ENCODE measurements at regions of chr14 and their contacts with region 1.

Region 1: DNA sequence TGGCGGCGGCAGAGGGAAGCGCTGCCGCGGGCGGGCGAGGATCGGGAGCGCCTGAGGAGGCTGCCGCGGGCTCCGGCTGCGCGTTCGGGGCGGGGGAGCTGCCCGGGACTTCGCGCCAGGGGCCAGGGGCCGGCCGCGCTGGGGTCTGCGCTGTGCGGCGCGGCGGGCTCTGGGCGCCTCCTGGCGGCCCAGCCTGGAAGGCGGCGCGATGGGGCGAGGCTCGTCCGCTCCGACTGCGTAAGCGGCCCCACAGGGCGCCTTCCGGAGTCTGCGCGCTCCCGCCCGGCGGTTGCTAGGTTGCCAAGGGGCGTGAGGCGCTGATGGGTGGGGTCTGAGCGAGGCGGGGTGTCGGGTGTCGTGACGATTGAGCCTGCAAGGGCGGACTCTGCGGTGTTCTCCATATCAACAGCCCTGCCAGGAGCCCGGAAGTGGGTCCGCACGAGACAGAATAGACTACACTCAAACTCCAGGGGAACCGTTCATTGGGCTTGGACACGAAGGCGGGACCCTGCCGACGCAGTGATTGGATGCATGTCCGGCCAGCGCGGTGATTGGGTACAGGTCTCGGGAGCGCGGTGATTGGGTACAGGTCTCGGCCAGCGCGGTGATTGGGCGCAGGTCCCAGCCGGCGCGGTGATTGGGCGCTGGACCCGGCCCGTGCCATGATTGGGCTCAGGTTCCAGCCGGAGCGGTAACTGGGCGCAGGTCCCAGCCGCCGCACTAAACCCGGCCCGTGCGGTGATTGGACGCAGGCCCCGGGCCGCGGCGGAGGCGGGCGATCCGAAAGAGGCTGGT is at the start of gene TEDC1:
- DNase-seq: peak; percentile 99
- ATAC-seq: peak; percentile 73
- H3K4me3 ChIP-seq: peak within 1 kb of the TSS; percentile 86
- H3K27ac ChIP-seq: peak within 1 kb of the TSS; percentile 80
- H3K4me1 ChIP-seq: peaks cover 19% of the 10 kb centered on the region
- H3K27me3 ChIP-seq: no peaks in the 10 kb centered on the region
- CTCF ChIP-seq: peak; percentile 53
- total RNA-seq, gene TEDC1: 66.7 and 108 TPM in 2 replicates

Region 2: GRCh38 chr14:105369653-105370040 is 121.1 kb before region 1 on chr14:
- CTCF ChIA-PET with region 1: interaction called, 10 read pairs
- POLR2A ChIA-PET with region 1: no interaction called
- intact Hi-C with region 1: loop called (anchors 1 kb)
- DNase-seq: no peak
- ATAC-seq: no peak
- H3K4me3 ChIP-seq: no peak overlapping the region
- H3K27ac ChIP-seq: no peak overlapping the region
- H3K4me1 ChIP-seq: no peaks in the 10 kb centered on the region
- H3K27me3 ChIP-seq: no peaks in the 10 kb centered on the region
- CTCF ChIP-seq: no peak

Region 3: GRCh38 chr14:105375635-105376057 is 115.1 kb before region 1 on chr14:
- CTCF ChIA-PET with region 1: interaction called, 10 read pairs
- POLR2A ChIA-PET with region 1: no interaction called
- intact Hi-C with region 1: loop called (anchors 1 kb)
- DNase-seq: no peak
- ATAC-seq: no peak
- H3K4me3 ChIP-seq: no peak overlapping the region
- H3K27ac ChIP-seq: no peak overlapping the region
- H3K4me1 ChIP-seq: no peaks in the 10 kb centered on the region
- H3K27me3 ChIP-seq: no peaks in the 10 kb centered on the region
- CTCF ChIP-seq: no peak

Region 4: GRCh38 chr14:105448706-105449111 is 42.1 kb before region 1 on chr14:
- CTCF ChIA-PET with region 1: no interaction called
- POLR2A ChIA-PET with region 1: no interaction called
- intact Hi-C with region 1: loop called (anchors 2 kb)
- DNase-seq: peak; percentile 48
- ATAC-seq: peak; percentile 79
- H3K4me3 ChIP-seq: no peak overlapping the region
- H3K27ac ChIP-seq: no peak overlapping the region
- H3K4me1 ChIP-seq: no peaks in the 10 kb centered on the region
- H3K27me3 ChIP-seq: no peaks in the 10 kb centered on the region
- CTCF ChIP-seq: peak; percentile 69

Region 5: DNA sequence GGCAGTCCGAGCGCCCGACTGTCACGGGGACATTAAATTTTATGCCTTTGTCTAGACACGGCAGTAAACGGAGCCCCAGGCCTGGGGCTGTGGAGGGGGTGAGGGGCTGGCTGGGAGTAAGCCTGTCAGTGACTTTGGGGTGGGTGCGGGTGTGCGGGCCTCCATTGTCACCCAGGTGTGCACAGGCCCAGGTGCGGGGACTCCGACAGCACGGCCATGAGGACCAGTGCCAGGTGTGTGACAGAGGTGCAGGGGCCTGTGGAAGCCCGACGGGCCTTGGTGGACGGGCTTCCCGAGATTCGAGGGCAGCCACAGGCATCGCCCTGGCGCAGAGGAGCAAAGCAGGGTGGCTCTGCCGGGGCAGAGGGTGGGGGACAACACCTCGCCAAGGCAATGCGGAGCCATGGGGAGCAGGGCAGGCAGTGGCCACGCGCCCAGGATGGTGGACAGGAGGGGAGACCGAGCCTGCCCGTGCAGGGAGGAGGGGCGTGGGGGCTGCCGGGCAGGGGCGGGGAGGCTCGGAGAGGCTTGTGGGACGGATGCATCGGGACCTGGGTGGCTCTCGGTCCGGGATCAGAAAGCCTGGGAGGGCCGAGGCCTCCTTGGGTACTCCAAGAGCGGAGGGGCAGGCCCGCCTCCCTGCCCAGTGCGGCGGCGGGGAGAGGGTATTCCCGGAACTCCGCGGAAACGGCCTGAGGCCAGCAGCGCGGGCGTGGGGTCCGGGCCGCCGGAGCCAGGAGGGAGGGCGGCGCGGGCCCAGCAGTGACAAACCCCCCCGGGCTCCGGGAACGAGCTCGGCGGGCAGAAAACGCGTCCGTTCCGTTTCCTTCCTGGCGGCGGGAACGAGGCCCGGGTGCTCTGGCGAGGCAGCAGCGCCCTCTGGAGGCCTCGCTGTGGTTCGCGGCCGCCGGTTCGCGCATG is 37.2 kb after region 1 on chr14:
- CTCF ChIA-PET with region 1: interaction called, 5 read pairs
- POLR2A ChIA-PET with region 1: no interaction called
- intact Hi-C with region 1: loop called (anchors 2 kb)
- DNase-seq: peak; percentile 79
- ATAC-seq: peak; percentile 69
- H3K4me3 ChIP-seq: peak overlapping the region; percentile 75
- H3K27ac ChIP-seq: no peak overlapping the region
- H3K4me1 ChIP-seq: peaks cover 10% of the 10 kb centered on the region; the same call in 1 of the 2 replicates
- H3K27me3 ChIP-seq: no peaks in the 10 kb centered on the region
- CTCF ChIP-seq: peak; percentile 66